ENCODE measurements at regions of chr10 and their contacts with region 1.

Region 1: DNA sequence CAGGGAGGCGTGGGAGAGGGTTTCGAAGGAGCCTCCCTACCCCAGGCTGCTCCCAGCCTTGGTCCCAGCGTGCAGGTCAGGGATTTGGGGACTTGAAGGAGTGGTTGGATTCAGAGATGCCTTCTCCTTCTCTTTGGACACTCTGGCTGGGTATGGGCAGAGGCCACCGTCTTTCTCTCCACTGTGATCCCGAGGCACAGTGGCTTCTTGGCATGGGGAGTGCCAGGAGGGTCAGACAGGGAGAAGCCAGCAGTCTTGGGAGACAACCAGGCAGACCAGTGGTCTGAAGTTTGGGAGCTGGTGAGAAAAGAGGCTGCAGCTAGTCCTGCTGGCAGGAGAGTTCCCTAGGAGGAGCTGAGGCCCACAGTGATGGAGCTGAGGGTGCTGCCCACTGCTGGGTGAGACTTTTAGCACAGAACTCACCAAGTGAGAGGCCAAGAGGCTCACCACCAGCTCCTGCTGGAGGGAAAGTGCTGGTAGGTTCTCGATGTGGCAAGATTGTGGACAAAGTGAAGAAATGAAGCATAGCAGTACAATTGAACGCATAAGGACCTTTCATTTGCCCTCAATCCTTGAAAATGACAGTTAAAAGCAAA is 35.2 kb upstream of the WDFY4 start:
- DNase-seq: no peak
- ATAC-seq: peak in 1 of 4 donors; percentile 43
- H3K4me3 ChIP-seq: no peak overlapping the region
- H3K27ac ChIP-seq: no peak overlapping the region
- H3K4me1 ChIP-seq: peaks cover 0 to 17% (median 0%) of the 10 kb centered on the region in 12 donors
- H3K27me3 ChIP-seq: no peaks in the 10 kb centered on the region
- CTCF ChIP-seq: peak in 2 of 12 donors; percentile 7 to 14
- POLR2A ChIP-seq: no peak

Region 2: GRCh38 chr10:48594803-48595538 is 54.5 kb before region 1 on chr10:
- intact Hi-C with region 1: no loop called
- DNase-seq: no peak
- ATAC-seq: no peak
- H3K4me3 ChIP-seq: no peak overlapping the region
- H3K27ac ChIP-seq: no peak overlapping the region
- H3K4me1 ChIP-seq: peaks cover 0 to 14% (median 0%) of the 10 kb centered on the region in 12 donors
- H3K27me3 ChIP-seq: peaks cover 0 to 9% (median 0%) of the 10 kb centered on the region in 9 donors
- CTCF ChIP-seq: no peak
- POLR2A ChIP-seq: no peak

Region 3: GRCh38 chr10:48608279-48608681 is 41.2 kb before region 1 on chr10:
- intact Hi-C with region 1: loop called in 2 of 10 experiments (anchors 2 to 5 kb)
- DNase-seq: no peak
- ATAC-seq: peak in 3 of 4 donors; percentile 34 to 46 (median 44)
- H3K4me3 ChIP-seq: no peak overlapping the region
- H3K27ac ChIP-seq: peak overlapping the region in 1 of 12 donors; percentile 85
- H3K4me1 ChIP-seq: peaks cover 0 to 69% (median 11%) of the 10 kb centered on the region in 12 donors
- H3K27me3 ChIP-seq: peaks cover 0 to 13% (median 0%) of the 10 kb centered on the region in 9 donors
- CTCF ChIP-seq: peak; percentile 37 to 71 (median 55)
- POLR2A ChIP-seq: no peak

Region 4: GRCh38 chr10:49177391-49178355 is 528.2 kb after region 1 on chr10:
- intact Hi-C with region 1: no loop called
- DNase-seq: peak; percentile 73 to 86 (median 84)
- ATAC-seq: peak; percentile 89 to 97 (median 92)
- H3K4me3 ChIP-seq: no peak overlapping the region
- H3K27ac ChIP-seq: peak overlapping the region; percentile 53 to 90 (median 81)
- H3K4me1 ChIP-seq: peaks cover 0 to 94% (median 33%) of the 10 kb centered on the region in 12 donors
- H3K27me3 ChIP-seq: no peaks in the 10 kb centered on the region
- CTCF ChIP-seq: no peak
- POLR2A ChIP-seq: no peak

Region 5: GRCh38 chr10:50310560-50311174 is 1661.2 kb after region 1 on chr10:
- intact Hi-C with region 1: no loop called
- DNase-seq: no peak
- ATAC-seq: no peak
- H3K4me3 ChIP-seq: no peak overlapping the region
- H3K27ac ChIP-seq: no peak overlapping the region
- H3K4me1 ChIP-seq: peaks cover 0 to 12% (median 9%) of the 10 kb centered on the region in 12 donors
- H3K27me3 ChIP-seq: no peaks in the 10 kb centered on the region
- CTCF ChIP-seq: peak in 5 of 12 donors; percentile 7 to 27 (median 16)
- POLR2A ChIP-seq: no peak

Measured in heart left ventricle (tissue), 16 donors.